Esophagus muscularis mucosa (tissue), 4 donors: ENCODE measurements at regions of chr21 and their contacts with region 1.

Region 1: GRCh38 chr21:36934864-36935420 is 31.5 kb downstream of the HLCS start:
- DNase-seq: no peak
- H3K4me3 ChIP-seq: no peak overlapping the region
- H3K27ac ChIP-seq: no peak overlapping the region
- H3K4me1 ChIP-seq: peaks cover 0 to 10% (median 9%) of the 10 kb centered on the region in 4 donors
- H3K27me3 ChIP-seq: no peaks in the 10 kb centered on the region
- CTCF ChIP-seq: no peak
- EP300 ChIP-seq: no peak
- POLR2A ChIP-seq: no peak

Region 2: DNA sequence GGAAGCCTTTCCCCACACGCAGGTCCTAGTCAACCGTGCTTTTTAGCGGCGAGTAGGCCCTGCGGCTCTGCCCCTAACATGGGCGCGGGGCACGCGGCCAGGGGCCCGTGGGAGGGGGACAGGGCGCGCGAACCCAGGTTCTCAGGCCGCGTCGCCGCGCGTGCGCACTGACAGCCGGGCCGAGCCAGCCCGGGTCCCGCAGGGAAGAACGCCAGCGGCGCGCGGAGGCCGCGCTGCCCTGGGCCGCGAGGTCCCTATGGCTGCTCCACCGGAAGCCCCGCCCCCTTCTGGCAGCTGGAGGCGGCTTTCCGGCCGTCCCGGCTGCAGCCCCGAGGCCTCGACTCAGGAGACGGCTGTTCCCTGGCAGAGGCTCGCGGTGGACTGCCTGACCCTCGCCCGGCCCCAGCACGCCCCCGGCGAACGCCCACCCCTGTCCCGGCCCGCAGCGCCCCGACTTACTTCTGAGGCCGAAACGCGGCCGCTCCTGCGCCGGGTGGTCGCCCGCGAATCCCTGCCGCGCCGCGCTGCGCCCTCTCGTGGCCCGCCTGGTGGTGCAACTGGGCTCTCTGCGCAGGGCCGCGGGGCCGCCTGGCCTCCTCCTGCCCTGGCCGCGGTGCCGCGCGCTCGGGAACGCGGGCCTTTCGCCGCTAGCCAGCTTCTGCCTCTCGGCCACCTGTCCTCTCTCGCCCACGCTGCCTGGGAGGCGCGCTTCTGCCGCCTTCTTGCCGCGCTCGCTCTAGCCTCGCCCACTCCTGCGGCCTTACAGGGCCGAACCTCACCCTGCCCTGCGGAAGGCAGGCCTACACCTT is 55.0 kb after region 1 on chr21:
- intact Hi-C with region 1: loop called (anchors 5 kb)
- DNase-seq: peak; percentile 95
- H3K4me3 ChIP-seq: peak overlapping the region; percentile 68 to 74 (median 69)
- H3K27ac ChIP-seq: peak overlapping the region; percentile 89 to 95 (median 93)
- H3K4me1 ChIP-seq: peaks cover 0 to 12% (median 6%) of the 10 kb centered on the region in 4 donors
- H3K27me3 ChIP-seq: peaks cover 0 to 22% (median 3%) of the 10 kb centered on the region in 4 donors
- CTCF ChIP-seq: peak in 2 of 3 experiments; percentile 79 to 97
- EP300 ChIP-seq: no peak
- POLR2A ChIP-seq: no peak

Region 3: DNA sequence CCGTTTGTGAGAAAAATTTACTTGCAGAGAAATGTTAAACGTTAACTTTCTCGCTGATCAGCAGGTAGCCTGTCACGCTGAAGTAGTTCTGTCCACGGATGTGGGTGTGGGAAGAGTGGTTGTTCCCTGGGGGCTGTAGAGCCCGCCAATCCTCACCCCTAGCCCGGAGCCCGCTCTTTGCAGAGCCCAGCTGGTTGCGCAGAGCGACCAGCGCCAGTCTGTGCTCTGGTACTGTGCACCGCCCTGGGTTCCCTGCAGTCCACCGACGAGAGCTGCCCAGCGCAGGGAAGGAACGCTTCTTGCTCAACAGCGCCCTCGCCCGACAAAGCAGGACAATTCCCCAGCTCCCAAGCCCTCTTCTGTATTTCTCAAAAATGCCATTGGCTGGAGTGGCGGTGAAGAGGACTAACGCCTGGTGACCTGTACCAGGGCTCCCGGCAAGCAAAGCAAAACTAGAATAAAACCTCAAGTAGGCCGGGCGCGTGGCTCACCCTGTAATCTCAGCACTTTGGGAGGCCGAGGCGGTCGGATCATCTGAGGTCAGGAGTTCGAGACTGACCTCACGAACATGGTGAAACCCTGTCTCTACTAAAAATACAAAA is 74.9 kb after region 1 on chr21:
- intact Hi-C with region 1: loop called (anchors 5 kb)
- DNase-seq: peak; percentile 93
- H3K4me3 ChIP-seq: peak overlapping the region; percentile 28 to 40 (median 34)
- H3K27ac ChIP-seq: no peak overlapping the region
- H3K4me1 ChIP-seq: peaks cover 13 to 27% (median 25%) of the 10 kb centered on the region in 4 donors
- H3K27me3 ChIP-seq: peaks cover 0 to 87% (median 20%) of the 10 kb centered on the region in 4 donors
- CTCF ChIP-seq: peak; percentile 76 to 87 (median 76)
- EP300 ChIP-seq: no peak
- POLR2A ChIP-seq: no peak